ENCODE measurements at regions of chr10 and their contacts with region 1.

Region 1: DNA sequence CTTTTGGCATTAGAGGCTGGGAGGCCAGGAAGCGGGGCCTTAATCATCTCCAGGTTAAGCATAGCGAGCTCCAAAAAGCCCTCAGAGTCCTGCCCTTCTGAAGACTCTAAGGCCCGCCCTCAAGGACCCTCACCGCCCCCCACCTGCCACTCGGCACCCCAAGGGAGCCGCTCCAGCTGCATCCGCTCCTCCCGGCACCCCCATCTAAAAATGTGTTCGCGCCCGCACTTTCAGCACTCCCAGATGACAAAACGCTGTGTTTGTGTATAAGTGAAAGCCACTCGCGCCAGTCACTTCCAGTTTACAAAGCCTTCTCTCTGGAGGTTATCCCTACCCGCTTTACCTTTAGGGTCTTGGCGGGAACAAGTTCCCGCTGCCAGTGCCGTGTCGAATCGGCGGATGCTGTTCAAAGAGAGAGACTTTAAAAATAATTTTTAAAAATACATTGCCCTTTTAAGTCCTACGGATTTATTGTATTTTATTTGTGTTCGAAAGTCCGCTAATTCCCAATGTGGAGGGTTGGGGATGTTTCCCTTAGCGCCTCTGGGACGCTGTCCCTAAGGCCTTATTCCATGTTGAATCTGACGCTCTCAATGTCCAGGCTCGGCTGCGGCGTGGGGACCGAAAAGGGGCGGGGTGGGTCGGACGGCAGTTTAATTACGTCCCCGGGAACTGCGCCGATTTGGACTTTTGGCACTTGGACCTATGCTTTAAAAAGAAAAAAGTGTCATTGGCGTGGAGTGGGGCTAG is at the starts of genes DCLRE1A and NHLRC2:
- DNase-seq: peak; percentile 83
- H3K4me3 ChIP-seq: peak within 1 kb of the TSS; percentile 94
- H3K4me3 Mint-ChIP-seq: peak within 1 kb of the TSS; percentile 98
- H3K27ac Mint-ChIP-seq: peak within 1 kb of the TSS; percentile 99
- H3K4me1 ChIP-seq: peaks cover 18% of the 10 kb centered on the region
- H3K4me1 Mint-ChIP-seq: no peaks in the 10 kb centered on the region
- H3K27me3 ChIP-seq: no peaks in the 10 kb centered on the region
- H3K27me3 Mint-ChIP-seq: no peaks in the 10 kb centered on the region
- CTCF ChIP-seq: no peak
- total RNA-seq, gene DCLRE1A: 13.3 and 13.5 TPM in 2 replicates
- total RNA-seq, gene NHLRC2: 30.8 and 37.4 TPM in 2 replicates

Region 2: DNA sequence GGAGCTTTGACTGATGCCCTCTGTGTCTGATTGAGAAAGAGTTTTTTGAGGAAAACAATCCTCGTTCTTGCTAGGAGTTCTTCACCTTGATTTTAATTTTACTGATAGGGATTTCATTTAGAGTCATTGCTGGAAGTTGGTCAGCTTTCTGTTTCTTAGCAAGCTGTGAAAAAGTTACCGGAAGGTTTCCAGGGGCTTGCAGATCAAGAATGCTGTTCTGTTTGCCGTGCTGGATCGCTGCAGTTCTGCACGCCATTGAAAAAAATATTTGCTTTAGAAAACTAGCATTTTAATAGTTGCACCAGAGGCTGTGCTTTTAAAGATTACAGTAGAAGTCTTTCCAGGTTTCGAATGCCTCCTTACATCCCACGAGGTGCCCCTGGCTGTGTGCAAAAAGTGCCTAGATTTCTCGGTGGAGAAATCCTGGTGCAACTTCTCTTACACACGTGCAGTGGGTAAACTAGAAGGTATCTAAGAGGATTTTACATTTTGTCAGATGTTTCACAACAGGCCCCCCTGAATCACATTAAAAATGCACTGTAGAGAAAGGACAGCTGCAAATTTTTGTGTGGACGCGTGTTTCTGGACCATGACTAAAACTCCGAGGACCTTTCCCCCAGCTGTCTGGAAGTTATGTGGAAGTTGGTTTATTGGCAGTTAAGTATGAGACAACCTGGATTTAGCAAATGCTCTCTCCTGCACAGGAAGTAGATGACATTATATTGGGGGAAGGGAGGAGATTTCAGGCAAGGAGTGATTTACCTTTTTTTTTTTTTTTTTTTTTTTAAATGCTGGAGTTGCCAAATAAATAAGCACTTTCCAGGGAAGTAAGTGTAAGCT is 898.4 kb before region 1 on chr10:
- CTCF ChIA-PET with region 1: no interaction called
- POLR2A ChIA-PET with region 1: interaction called, 20 read pairs
- intact Hi-C with region 1: no loop called
- DNase-seq: no peak
- H3K4me3 ChIP-seq: peak overlapping the region; percentile 5; the same call in 1 of the 2 replicates
- H3K4me3 Mint-ChIP-seq: peak overlapping the region; percentile 69
- H3K27ac Mint-ChIP-seq: peak overlapping the region; percentile 79
- H3K4me1 ChIP-seq: peaks cover 65% of the 10 kb centered on the region
- H3K4me1 Mint-ChIP-seq: peaks cover 52% of the 10 kb centered on the region
- H3K27me3 ChIP-seq: no peaks in the 10 kb centered on the region
- H3K27me3 Mint-ChIP-seq: no peaks in the 10 kb centered on the region
- CTCF ChIP-seq: no peak

Region 3: GRCh38 chr10:113689057-113689456 is 165.1 kb before region 1 on chr10:
- CTCF ChIA-PET with region 1: no interaction called
- POLR2A ChIA-PET with region 1: no interaction called
- intact Hi-C with region 1: no loop called
- DNase-seq: no peak
- H3K4me3 ChIP-seq: no peak overlapping the region
- H3K4me3 Mint-ChIP-seq: no peak overlapping the region
- H3K27ac Mint-ChIP-seq: no peak overlapping the region
- H3K4me1 ChIP-seq: no peaks in the 10 kb centered on the region
- H3K4me1 Mint-ChIP-seq: no peaks in the 10 kb centered on the region
- H3K27me3 ChIP-seq: no peaks in the 10 kb centered on the region
- H3K27me3 Mint-ChIP-seq: no peaks in the 10 kb centered on the region
- CTCF ChIP-seq: no peak

Region 4: GRCh38 chr10:113704637-113705343 is 149.4 kb before region 1 on chr10:
- CTCF ChIA-PET with region 1: no interaction called
- POLR2A ChIA-PET with region 1: no interaction called
- intact Hi-C with region 1: loop called (anchors 5 kb)
- DNase-seq: peak in 1 of 2 experiments; percentile 45
- H3K4me3 ChIP-seq: no peak overlapping the region
- H3K4me3 Mint-ChIP-seq: no peak overlapping the region
- H3K27ac Mint-ChIP-seq: no peak overlapping the region
- H3K4me1 ChIP-seq: no peaks in the 10 kb centered on the region
- H3K4me1 Mint-ChIP-seq: no peaks in the 10 kb centered on the region
- H3K27me3 ChIP-seq: no peaks in the 10 kb centered on the region
- H3K27me3 Mint-ChIP-seq: no peaks in the 10 kb centered on the region
- CTCF ChIP-seq: peak; percentile 71 to 76

Region 5: GRCh38 chr10:113735921-113736320 is 118.3 kb before region 1 on chr10:
- CTCF ChIA-PET with region 1: no interaction called
- POLR2A ChIA-PET with region 1: no interaction called
- intact Hi-C with region 1: loop called (anchors 5 kb)
- DNase-seq: peak; percentile 61 to 64
- H3K4me3 ChIP-seq: no peak overlapping the region
- H3K4me3 Mint-ChIP-seq: no peak overlapping the region
- H3K27ac Mint-ChIP-seq: no peak overlapping the region
- H3K4me1 ChIP-seq: peaks cover 9% of the 10 kb centered on the region
- H3K4me1 Mint-ChIP-seq: no peaks in the 10 kb centered on the region
- H3K27me3 ChIP-seq: no peaks in the 10 kb centered on the region
- H3K27me3 Mint-ChIP-seq: no peaks in the 10 kb centered on the region
- CTCF ChIP-seq: peak; percentile 22 to 46

Region 6: DNA sequence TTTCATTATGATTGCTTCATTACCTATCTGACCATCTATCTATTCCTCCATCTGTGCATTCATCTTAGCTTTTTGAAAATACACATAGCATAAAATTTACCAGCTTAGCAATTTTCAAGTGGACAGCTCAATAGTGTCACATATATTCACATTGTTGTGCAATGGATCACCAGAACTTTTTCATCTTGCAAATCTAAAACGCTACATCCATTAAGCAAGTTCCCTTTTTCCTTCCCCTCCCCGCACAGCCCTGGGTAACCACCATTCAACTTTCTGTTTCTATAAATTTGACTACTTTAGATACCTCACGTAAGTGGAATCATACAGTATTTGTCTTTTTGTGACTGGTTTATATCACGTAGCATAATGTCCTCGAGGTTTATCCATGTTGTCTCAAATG is 111.5 kb after region 1 on chr10:
- CTCF ChIA-PET with region 1: no interaction called
- POLR2A ChIA-PET with region 1: no interaction called
- intact Hi-C with region 1: no loop called
- DNase-seq: no peak
- H3K4me3 ChIP-seq: no peak overlapping the region
- H3K4me3 Mint-ChIP-seq: no peak overlapping the region
- H3K27ac Mint-ChIP-seq: no peak overlapping the region
- H3K4me1 ChIP-seq: peaks cover 10% of the 10 kb centered on the region
- H3K4me1 Mint-ChIP-seq: peaks cover 13% of the 10 kb centered on the region
- H3K27me3 ChIP-seq: no peaks in the 10 kb centered on the region
- H3K27me3 Mint-ChIP-seq: no peaks in the 10 kb centered on the region
- CTCF ChIP-seq: no peak

Measured in Caco-2 (cell line).